CD8-positive, alpha-beta memory T cell (primary cell): ENCODE measurements at regions of chr16 and their contacts with region 1.

Region 1: GRCh38 chr16:10906914-10907756 is 30.1 kb downstream of the CIITA start:
- DNase-seq: no peak
- H3K4me3 ChIP-seq: no peak overlapping the region
- H3K4me3 Mint-ChIP-seq: no peak overlapping the region
- H3K27ac ChIP-seq: no peak overlapping the region
- H3K27ac Mint-ChIP-seq: no peak overlapping the region
- H3K4me1 ChIP-seq: no peaks in the 10 kb centered on the region
- H3K4me1 Mint-ChIP-seq: no peaks in the 10 kb centered on the region
- H3K27me3 ChIP-seq: no peaks in the 10 kb centered on the region
- H3K27me3 Mint-ChIP-seq: peaks cover 0 to 1% of the 10 kb centered on the region in 2 donors

Region 2: DNA sequence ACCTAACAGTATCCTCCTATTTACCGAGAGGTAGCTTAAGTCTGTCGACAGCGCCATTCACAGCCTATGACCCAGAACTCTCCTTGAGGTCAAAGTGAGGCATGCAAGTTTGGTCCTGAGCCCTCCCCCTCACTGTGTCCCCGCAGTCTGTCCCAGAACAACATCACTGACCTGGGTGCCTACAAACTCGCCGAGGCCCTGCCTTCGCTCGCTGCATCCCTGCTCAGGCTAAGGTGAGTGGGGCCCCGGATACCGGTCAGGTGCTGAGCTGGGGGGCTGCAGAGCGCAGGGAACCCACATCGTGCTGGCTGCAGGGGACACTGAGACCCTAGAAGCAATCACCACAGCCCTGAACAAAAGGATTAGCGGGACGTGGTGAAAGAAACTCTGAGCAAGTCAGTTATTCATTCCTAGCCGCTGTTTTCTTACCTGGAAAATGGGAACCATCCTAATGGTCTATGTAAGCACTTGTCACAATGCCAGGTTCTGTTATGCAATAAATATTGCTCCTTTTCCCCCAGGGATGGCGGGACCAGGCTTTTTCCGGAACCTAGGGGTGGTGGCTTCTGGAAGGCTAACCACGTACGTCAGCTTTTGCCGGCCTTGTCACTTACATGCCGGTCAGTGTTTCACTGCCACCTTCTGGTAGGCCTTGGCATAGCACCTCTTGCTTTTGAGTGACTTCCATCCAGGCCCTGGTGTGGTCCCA is 11.3 kb after region 1 on chr16:
- CTCF ChIA-PET with region 1: interaction called, 14 read pairs
- POLR2A ChIA-PET with region 1: no interaction called
- DNase-seq: peak; percentile 49 to 81 (median 66)
- H3K4me3 ChIP-seq: no peak overlapping the region
- H3K4me3 Mint-ChIP-seq: no peak overlapping the region
- H3K27ac ChIP-seq: no peak overlapping the region
- H3K27ac Mint-ChIP-seq: peak overlapping the region in 2 of 8 donors; percentile 2 to 21
- H3K4me1 ChIP-seq: peaks cover 4% of the 10 kb centered on the region
- H3K4me1 Mint-ChIP-seq: peaks cover 4 to 7% (median 5%) of the 10 kb centered on the region in 3 donors
- H3K27me3 ChIP-seq: no peaks in the 10 kb centered on the region
- H3K27me3 Mint-ChIP-seq: no peaks in the 10 kb centered on the region

Region 3: GRCh38 chr16:11386791-11387546 is 479.8 kb after region 1 on chr16:
- CTCF ChIA-PET with region 1: no interaction called
- POLR2A ChIA-PET with region 1: no interaction called
- DNase-seq: no peak
- H3K4me3 ChIP-seq: no peak overlapping the region
- H3K4me3 Mint-ChIP-seq: no peak overlapping the region
- H3K27ac ChIP-seq: no peak overlapping the region
- H3K27ac Mint-ChIP-seq: no peak overlapping the region
- H3K4me1 ChIP-seq: no peaks in the 10 kb centered on the region
- H3K4me1 Mint-ChIP-seq: no peaks in the 10 kb centered on the region
- H3K27me3 ChIP-seq: no peaks in the 10 kb centered on the region
- H3K27me3 Mint-ChIP-seq: peaks cover 4 to 5% of the 10 kb centered on the region in 2 donors